Mammary epithelial cell (primary cell): ENCODE measurements at regions of chr2 and their contacts with region 1.

Region 1: GRCh38 chr2:238362626-238363025 is 42.3 kb downstream of the TRAF3IP1 start:
- DNase-seq: no peak
- H3K4me3 ChIP-seq: no peak overlapping the region
- H3K27ac ChIP-seq: no peak overlapping the region
- H3K4me1 ChIP-seq: no peaks in the 10 kb centered on the region
- H3K27me3 ChIP-seq: no peaks in the 10 kb centered on the region
- CTCF ChIP-seq: no peak

Region 2: GRCh38 chr2:238462782-238463396 is 100.3 kb after region 1 on chr2:
- CTCF ChIA-PET with region 1: no interaction called
- dilution Hi-C with region 1: no loop called
- in situ Hi-C with region 1: loop called in 1 of 2 experiments (anchors 5 kb)
- intact Hi-C with region 1: loop called (anchors 1 kb)
- DNase-seq: peak; percentile 61
- H3K4me3 ChIP-seq: no peak overlapping the region
- H3K27ac ChIP-seq: no peak overlapping the region
- H3K4me1 ChIP-seq: peaks cover 16% of the 10 kb centered on the region
- H3K27me3 ChIP-seq: no peaks in the 10 kb centered on the region
- CTCF ChIP-seq: peak; percentile 73

Region 3: GRCh38 chr2:239106314-239106908 is 743.8 kb after region 1 on chr2:
- CTCF ChIA-PET with region 1: no interaction called
- dilution Hi-C with region 1: no loop called
- in situ Hi-C with region 1: no loop called
- intact Hi-C with region 1: loop called (anchors 5 kb)
- DNase-seq: peak; percentile 43
- H3K4me3 ChIP-seq: no peak overlapping the region
- H3K27ac ChIP-seq: no peak overlapping the region
- H3K4me1 ChIP-seq: peaks cover 9% of the 10 kb centered on the region
- H3K27me3 ChIP-seq: no peaks in the 10 kb centered on the region
- CTCF ChIP-seq: peak; percentile 45 to 77